ENCODE measurements at regions of chr13 and their contacts with region 1.

Region 1: DNA sequence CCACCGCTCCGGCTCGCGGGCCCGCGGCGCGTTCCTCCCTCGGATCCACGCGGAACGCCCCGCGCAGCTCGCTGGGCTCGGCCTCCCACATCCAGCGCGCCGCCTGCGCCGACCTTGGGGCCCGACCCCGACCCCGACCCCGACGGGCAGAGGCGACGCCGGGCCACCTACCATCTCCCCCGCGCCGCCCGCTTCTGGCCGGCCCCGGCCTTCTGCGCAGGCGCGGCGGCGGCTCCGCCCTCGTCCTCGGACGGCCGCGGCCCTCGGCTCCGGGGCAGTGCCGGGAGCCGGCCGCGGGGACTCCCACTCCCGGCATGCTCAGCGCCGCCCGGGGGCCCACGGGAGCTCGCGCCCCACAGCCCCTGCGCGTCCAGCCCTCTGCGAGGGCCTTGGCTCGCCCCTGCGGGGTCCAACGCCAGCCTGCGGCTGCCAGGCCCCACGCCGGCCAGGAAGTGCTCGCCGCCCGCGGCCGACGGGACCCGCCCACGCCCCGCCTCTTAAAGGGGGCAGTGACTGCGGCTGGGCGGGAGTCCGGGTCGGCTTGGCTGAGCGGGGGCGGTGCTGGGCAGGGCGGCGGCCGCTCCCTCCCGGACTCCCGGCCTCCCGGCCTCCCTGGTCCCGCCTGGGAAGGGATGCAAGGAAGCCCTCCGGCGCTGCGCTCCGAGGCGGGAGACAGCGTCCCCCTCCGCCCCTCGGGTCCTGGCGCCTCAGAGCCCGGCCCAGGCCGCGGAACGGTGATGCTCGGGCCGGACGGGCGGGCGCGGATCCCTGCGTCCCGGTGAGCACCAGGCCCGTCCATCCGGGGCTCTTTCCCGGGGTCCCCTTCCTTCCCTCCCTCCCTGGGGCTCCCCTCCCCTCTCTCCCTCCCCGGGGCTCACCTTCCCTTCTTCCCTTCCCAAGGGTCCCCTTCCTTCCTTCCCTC is at the start of gene DCUN1D2:
- DNase-seq: peak; percentile 80 to 97
- H3K4me3 ChIP-seq: peak within 1 kb of the TSS; percentile 98 to 99
- H3K27ac ChIP-seq: peak within 1 kb of the TSS; percentile 88 to 95
- H3K4me1 ChIP-seq: peaks cover 23 to 48% of the 10 kb centered on the region in 2 donors
- H3K27me3 ChIP-seq: no peaks in the 10 kb centered on the region
- CTCF ChIP-seq: no peak
- total RNA-seq, gene DCUN1D2: 5.9 TPM

Region 2: DNA sequence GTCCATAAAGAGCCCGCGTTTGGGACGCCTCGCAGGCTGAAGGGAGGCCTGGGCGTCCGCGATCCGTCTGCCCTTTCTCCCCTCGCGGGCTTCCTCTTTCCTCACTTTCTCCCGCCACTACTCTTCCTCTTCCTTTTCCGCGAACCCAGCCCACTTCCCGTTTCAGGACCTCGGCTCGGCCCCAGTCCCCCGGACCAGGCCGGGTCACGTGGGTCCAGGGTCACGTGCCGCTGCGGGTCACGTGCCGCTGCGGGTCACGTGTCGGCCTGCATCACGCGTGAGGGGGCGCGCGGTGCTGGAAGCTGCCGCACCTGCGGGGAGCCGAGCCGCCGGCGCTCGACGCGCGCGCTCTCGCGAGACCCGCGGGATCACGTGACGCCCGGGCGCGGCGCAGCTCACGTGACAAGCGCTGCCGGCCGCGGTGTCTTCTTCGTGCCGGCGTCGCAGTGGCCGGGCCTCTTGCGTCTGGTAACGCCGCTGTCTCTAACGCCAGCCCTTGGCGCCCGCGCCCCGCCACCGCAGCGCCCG is 193.9 kb before region 1 on chr13 and contains the start of gene LAMP1:
- intact Hi-C with region 1: loop called (anchors 2 kb)
- DNase-seq: peak; percentile 91 to 100
- H3K4me3 ChIP-seq: peak within 1 kb of the TSS; percentile 93 to 95
- H3K27ac ChIP-seq: peak within 1 kb of the TSS; percentile 67 to 73
- H3K4me1 ChIP-seq: peaks cover 0 to 7% of the 10 kb centered on the region in 2 donors
- H3K27me3 ChIP-seq: no peaks in the 10 kb centered on the region
- CTCF ChIP-seq: peak in 1 of 3 experiments; percentile 25
- total RNA-seq, gene LAMP1: 126 TPM

Region 3: GRCh38 chr13:113410472-113411201 is 80.1 kb before region 1 on chr13:
- intact Hi-C with region 1: loop called (anchors 1 kb)
- DNase-seq: peak; percentile 35 to 92
- H3K4me3 ChIP-seq: peak overlapping the region in 1 of 2 donors; percentile 31
- H3K27ac ChIP-seq: peak overlapping the region; percentile 84 to 97
- H3K4me1 ChIP-seq: peaks cover 15 to 39% of the 10 kb centered on the region in 2 donors
- H3K27me3 ChIP-seq: no peaks in the 10 kb centered on the region
- CTCF ChIP-seq: no peak

Region 4: GRCh38 chr13:113474179-113474578 is 16.6 kb before region 1 on chr13:
- intact Hi-C with region 1: no loop called
- DNase-seq: no peak
- H3K4me3 ChIP-seq: no peak overlapping the region
- H3K27ac ChIP-seq: no peak overlapping the region
- H3K4me1 ChIP-seq: no peaks in the 10 kb centered on the region
- H3K27me3 ChIP-seq: no peaks in the 10 kb centered on the region
- CTCF ChIP-seq: no peak

Region 5: GRCh38 chr13:113547238-113547971 is 56.6 kb after region 1 on chr13:
- intact Hi-C with region 1: loop called (anchors 2 kb)
- DNase-seq: peak in 1 of 2 donors; percentile 64
- H3K4me3 ChIP-seq: no peak overlapping the region
- H3K27ac ChIP-seq: peak overlapping the region; percentile 56 to 72
- H3K4me1 ChIP-seq: peaks cover 5 to 21% of the 10 kb centered on the region in 2 donors
- H3K27me3 ChIP-seq: no peaks in the 10 kb centered on the region
- CTCF ChIP-seq: no peak

Measured in ascending aorta (tissue), 2 donors.